Naive thymus-derived CD4-positive, alpha-beta T cell (primary cell): ENCODE measurements at regions of chr2 and their contacts with region 1.

Region 1: GRCh38 chr2:237691908-237692600 is 64.7 kb downstream of the LRRFIP1 start:
- DNase-seq: peak; percentile 84 to 97 (median 90)
- ATAC-seq: peak; percentile 75
- H3K4me3 ChIP-seq: peak overlapping the region; percentile 82
- H3K4me3 Mint-ChIP-seq: peak overlapping the region; percentile 86 to 98 (median 92)
- H3K27ac ChIP-seq: peak overlapping the region; percentile 97
- H3K27ac Mint-ChIP-seq: peak overlapping the region; percentile 89 to 98 (median 94)
- H3K4me1 ChIP-seq: peaks cover 61 to 63% of the 10 kb centered on the region in 2 donors
- H3K4me1 Mint-ChIP-seq: peaks cover 59 to 86% (median 74%) of the 10 kb centered on the region in 7 donors
- H3K27me3 ChIP-seq: no peaks in the 10 kb centered on the region
- H3K27me3 Mint-ChIP-seq: no peaks in the 10 kb centered on the region

Region 2: GRCh38 chr2:237434866-237435311 is 257.2 kb before region 1 on chr2:
- CTCF ChIA-PET with region 1: no interaction called
- POLR2A ChIA-PET with region 1: interaction called, 3 read pairs
- intact Hi-C with region 1: loop called in 1 of 2 experiments (anchors 5 kb)
- DNase-seq: peak; percentile 29 to 85 (median 71)
- ATAC-seq: peak; percentile 83
- H3K4me3 ChIP-seq: peak overlapping the region; percentile 44
- H3K4me3 Mint-ChIP-seq: peak overlapping the region; percentile 60 to 89 (median 81)
- H3K27ac ChIP-seq: peak overlapping the region; percentile 64
- H3K27ac Mint-ChIP-seq: peak overlapping the region; percentile 84 to 100 (median 95)
- H3K4me1 ChIP-seq: peaks cover 35 to 84% of the 10 kb centered on the region in 2 donors
- H3K4me1 Mint-ChIP-seq: peaks cover 53 to 94% (median 91%) of the 10 kb centered on the region in 7 donors
- H3K27me3 ChIP-seq: no peaks in the 10 kb centered on the region
- H3K27me3 Mint-ChIP-seq: no peaks in the 10 kb centered on the region

Region 3: GRCh38 chr2:237708065-237708398 is 16.0 kb after region 1 on chr2:
- CTCF ChIA-PET with region 1: interaction called, 7 read pairs
- POLR2A ChIA-PET with region 1: interaction called, 85 read pairs
- intact Hi-C with region 1: loop called in 1 of 2 experiments (anchors 1 kb)
- DNase-seq: no peak
- ATAC-seq: peak; percentile 13
- H3K4me3 ChIP-seq: no peak overlapping the region
- H3K4me3 Mint-ChIP-seq: peak overlapping the region in 5 of 10 donors; percentile 4 to 60 (median 49)
- H3K27ac ChIP-seq: peak overlapping the region; percentile 46
- H3K27ac Mint-ChIP-seq: peak overlapping the region in 7 of 9 donors; percentile 70 to 94 (median 89)
- H3K4me1 ChIP-seq: peaks cover 26 to 34% of the 10 kb centered on the region in 2 donors
- H3K4me1 Mint-ChIP-seq: peaks cover 44 to 81% (median 68%) of the 10 kb centered on the region in 7 donors
- H3K27me3 ChIP-seq: no peaks in the 10 kb centered on the region
- H3K27me3 Mint-ChIP-seq: no peaks in the 10 kb centered on the region

Region 4: DNA sequence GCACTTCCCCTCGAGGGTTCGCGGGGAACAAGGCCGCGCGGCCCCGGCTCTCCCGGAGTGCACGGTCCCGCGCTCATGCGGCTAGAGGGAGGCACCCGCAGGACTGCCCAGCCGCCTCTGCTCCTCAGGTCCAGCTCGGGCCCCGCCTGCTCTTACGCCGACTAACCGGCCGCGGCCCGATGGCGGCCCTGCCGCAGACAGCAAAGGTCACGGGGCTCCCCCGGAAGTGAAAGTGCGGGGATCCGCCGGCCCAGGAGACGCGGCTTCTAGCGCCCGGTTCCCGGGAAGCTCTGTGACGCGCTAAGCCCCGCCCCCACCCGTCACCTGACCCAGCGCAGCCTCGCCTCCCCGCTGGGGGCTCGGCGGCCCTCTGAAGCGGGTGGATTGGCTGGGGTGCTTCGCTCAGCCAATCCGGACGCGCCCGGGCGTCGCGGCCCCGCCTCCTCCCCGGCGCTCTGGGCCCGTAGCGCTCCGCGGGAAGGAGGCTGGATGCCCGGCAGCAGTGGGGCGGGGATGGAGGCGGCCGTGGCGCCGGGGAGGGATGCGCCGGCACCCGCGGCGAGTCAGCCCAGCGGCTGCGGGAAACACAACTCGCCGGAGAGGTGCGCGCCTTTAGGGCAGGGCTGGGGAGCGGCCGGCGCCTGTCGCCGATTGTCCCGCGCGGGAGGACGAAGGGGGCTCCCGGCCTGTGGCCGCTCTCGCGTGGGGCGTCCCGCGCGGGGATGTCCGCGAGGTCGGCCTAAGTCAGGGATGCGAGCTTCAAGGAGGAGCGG is 368.7 kb after region 1 on chr2 and contains the start of gene SCLY:
- CTCF ChIA-PET with region 1: no interaction called
- POLR2A ChIA-PET with region 1: no interaction called
- intact Hi-C with region 1: loop called (anchors 5 kb)
- DNase-seq: peak; percentile 86 to 95 (median 93)
- ATAC-seq: peak; percentile 99
- H3K4me3 ChIP-seq: peak within 1 kb of the TSS; percentile 96
- H3K4me3 Mint-ChIP-seq: peak within 1 kb of the TSS; percentile 85 to 98 (median 88)
- H3K27ac ChIP-seq: peak within 1 kb of the TSS; percentile 85
- H3K27ac Mint-ChIP-seq: peak within 1 kb of the TSS; percentile 80 to 93 (median 90)
- H3K4me1 ChIP-seq: peaks cover 5 to 12% of the 10 kb centered on the region in 2 donors
- H3K4me1 Mint-ChIP-seq: peaks cover 24 to 57% (median 37%) of the 10 kb centered on the region in 7 donors
- H3K27me3 ChIP-seq: peaks cover 0 to 3% of the 10 kb centered on the region in 2 donors
- H3K27me3 Mint-ChIP-seq: peaks cover 3 to 16% (median 13%) of the 10 kb centered on the region in 5 donors
- total RNA-seq, gene SCLY: 16.1 to 47.3 (median 29.1) TPM

Region 5: GRCh38 chr2:238771218-238771617 is 1079.2 kb after region 1 on chr2:
- CTCF ChIA-PET with region 1: no interaction called
- POLR2A ChIA-PET with region 1: no interaction called
- intact Hi-C with region 1: no loop called
- DNase-seq: no peak
- ATAC-seq: no peak
- H3K4me3 ChIP-seq: no peak overlapping the region
- H3K4me3 Mint-ChIP-seq: no peak overlapping the region
- H3K27ac ChIP-seq: no peak overlapping the region
- H3K27ac Mint-ChIP-seq: no peak overlapping the region
- H3K4me1 ChIP-seq: no peaks in the 10 kb centered on the region
- H3K4me1 Mint-ChIP-seq: peaks cover 0 to 3% (median 0%) of the 10 kb centered on the region in 7 donors
- H3K27me3 ChIP-seq: no peaks in the 10 kb centered on the region
- H3K27me3 Mint-ChIP-seq: peaks cover 0 to 64% (median 39%) of the 10 kb centered on the region in 5 donors